AG04450 (cell line): ENCODE measurements at regions of chr14 and their contacts with region 1.

Region 1: GRCh38 chr14:20970983-20971704 is 15.9 kb downstream of the RNASE2 start:
- DNase-seq: peak; percentile 69
- H3K4me3 ChIP-seq: peak overlapping the region; percentile 69
- H3K27ac ChIP-seq: peak overlapping the region; percentile 47
- H3K27me3 ChIP-seq: peaks cover 12% of the 10 kb centered on the region
- CTCF ChIP-seq: peak; percentile 98

Region 2: DNA sequence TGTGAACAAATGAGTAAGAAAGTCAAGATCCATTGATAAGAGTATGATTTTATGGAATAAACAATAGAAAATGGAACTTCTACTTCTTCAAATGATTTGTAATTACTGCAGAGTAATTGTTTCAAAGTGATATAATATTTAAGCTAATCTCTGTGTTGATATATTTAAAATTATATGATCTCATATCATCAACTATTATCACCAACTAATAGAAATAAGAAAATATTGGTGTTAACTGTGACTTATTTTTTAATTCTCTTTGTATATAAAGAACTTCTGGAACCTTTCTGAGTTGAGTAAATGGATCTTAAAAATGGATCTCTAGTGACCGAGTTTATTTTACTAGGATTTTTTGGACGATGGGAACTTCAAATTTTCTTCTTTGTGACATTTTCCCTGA is 911.4 kb before region 1 on chr14 and contains the start of gene OR4L1:
- CTCF ChIA-PET with region 1: no interaction called
- POLR2A ChIA-PET with region 1: no interaction called
- DNase-seq: no peak
- H3K4me3 ChIP-seq: no peak within 1 kb of the TSS
- H3K27ac ChIP-seq: no peak within 1 kb of the TSS
- H3K27me3 ChIP-seq: no peaks in the 10 kb centered on the region
- CTCF ChIP-seq: no peak
- polyA plus RNA-seq, gene OR4L1: not detected in 2 replicates

Region 3: GRCh38 chr14:20682435-20683124 is 288.6 kb before region 1 on chr14:
- CTCF ChIA-PET with region 1: interaction called, 16 read pairs
- POLR2A ChIA-PET with region 1: no interaction called
- DNase-seq: no peak
- H3K4me3 ChIP-seq: peak overlapping the region; percentile 86
- H3K27ac ChIP-seq: peak overlapping the region; percentile 99
- H3K27me3 ChIP-seq: no peaks in the 10 kb centered on the region
- CTCF ChIP-seq: 0 out of 2 replicates have a peak, but pooled peaks have one; percentile 14

Region 4: DNA sequence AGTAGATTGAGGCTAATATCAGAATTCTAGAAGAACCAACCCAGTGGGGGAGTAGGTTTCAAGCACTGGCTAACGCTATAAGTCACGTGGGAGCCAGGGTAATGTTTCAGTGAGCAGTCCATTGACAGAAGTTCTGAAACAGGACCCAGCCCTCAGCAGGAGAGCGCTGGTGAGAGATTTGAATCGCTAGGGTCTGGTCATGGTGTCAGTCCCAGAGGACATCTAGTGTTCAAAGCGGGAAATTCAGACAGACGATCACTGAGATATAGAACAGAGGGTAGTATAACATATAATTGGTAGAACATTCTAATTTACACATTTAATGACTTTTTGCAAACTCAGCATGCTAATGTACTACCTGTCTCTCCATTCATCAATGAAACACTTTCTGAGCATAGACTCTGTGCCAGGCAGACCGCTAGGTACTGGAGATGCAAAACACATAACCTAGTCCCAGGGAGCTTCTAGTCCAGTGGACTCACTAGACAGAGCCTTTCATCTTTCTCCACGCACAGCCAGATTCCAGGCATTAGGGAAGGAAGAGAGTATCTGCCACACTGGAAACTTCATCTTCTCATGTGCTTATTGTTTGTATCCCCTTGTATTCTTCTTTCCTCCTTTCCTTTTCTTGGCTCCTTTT is 115.4 kb before region 1 on chr14:
- CTCF ChIA-PET with region 1: interaction called, 80 read pairs
- POLR2A ChIA-PET with region 1: no interaction called
- DNase-seq: no peak
- H3K4me3 ChIP-seq: no peak overlapping the region
- H3K27ac ChIP-seq: no peak overlapping the region
- H3K27me3 ChIP-seq: peaks cover 7% of the 10 kb centered on the region
- CTCF ChIP-seq: peak; percentile 64

Region 5: GRCh38 chr14:20982646-20983369 is 11.7 kb after region 1 on chr14:
- CTCF ChIA-PET with region 1: interaction called, 42 read pairs
- POLR2A ChIA-PET with region 1: interaction called, 4 read pairs
- DNase-seq: no peak
- H3K4me3 ChIP-seq: no peak overlapping the region
- H3K27ac ChIP-seq: no peak overlapping the region
- H3K27me3 ChIP-seq: peaks cover 9% of the 10 kb centered on the region
- CTCF ChIP-seq: no peak

Region 6: DNA sequence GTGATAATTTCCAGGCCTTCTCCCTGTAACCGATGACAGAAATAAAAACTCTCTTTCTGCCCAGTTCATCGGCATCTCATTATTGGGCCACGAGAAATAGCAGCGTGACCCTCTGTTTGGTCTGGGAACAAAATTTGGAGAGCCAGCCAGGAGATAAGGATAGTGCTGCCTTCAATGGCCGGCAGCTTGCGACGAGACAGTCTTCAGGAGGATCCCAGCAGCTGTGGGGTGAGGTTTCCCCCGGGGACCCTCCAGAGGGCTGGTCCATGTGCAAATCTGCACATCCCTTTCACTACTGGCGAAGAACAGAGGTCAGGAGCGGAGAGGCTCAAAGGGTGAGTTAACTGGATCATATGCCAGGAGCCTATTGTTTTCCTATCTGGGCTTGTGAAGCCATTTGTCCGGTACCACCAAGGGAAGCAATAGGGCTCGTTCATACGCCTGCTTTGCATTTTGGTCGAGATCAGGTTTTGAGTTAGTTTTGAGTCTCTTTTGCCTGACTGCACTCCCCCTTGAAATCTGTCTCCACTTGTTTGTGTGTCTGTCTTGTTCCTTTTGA is 32.7 kb after region 1 on chr14:
- CTCF ChIA-PET with region 1: interaction called, 55 read pairs
- POLR2A ChIA-PET with region 1: no interaction called
- DNase-seq: no peak
- H3K4me3 ChIP-seq: no peak overlapping the region
- H3K27ac ChIP-seq: no peak overlapping the region
- H3K27me3 ChIP-seq: no peaks in the 10 kb centered on the region
- CTCF ChIP-seq: no peak

Region 7: DNA sequence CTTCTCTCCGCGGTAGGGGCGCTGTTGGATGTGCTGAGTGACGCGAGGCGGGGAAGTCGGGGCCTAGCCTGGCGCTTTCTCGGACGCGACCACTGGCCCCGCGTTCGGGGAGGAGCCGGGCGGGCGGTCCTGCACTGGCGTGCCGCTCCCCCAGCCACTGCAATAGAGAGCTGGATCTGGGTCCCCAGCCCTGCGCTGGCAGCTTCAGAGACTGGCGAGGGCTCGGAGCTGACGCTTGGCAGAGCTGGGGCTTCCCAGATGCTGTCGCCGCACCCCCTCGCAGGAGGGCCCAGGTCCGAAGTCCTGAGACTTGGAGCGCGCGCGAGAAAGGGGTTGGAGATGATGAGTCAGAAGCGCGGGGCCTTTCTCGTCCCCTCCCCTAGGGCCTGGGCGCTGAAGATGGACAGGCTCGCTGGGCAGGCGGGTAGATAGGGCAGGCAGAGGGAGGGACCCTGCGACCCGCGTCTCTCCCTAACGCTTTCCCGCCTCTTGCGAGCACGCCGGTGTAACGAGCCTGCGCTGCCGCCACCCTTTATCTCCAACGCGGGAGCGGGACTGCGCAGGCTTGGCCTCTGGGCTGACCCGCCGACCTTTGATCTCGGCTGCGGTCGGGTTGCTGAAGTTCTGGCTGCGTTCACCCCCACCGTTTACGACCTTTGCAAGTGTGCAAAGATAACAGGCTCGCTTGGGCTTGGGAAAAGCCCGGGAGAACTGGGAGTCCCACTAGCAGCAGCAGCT is 132.7 kb after region 1 on chr14:
- CTCF ChIA-PET with region 1: interaction called, 28 read pairs
- POLR2A ChIA-PET with region 1: interaction called, 3 read pairs
- DNase-seq: peak; percentile 90
- H3K4me3 ChIP-seq: peak overlapping the region; percentile 75
- H3K27ac ChIP-seq: peak overlapping the region; percentile 98
- H3K27me3 ChIP-seq: peaks cover 6% of the 10 kb centered on the region
- CTCF ChIP-seq: peak; percentile 84

Region 8: DNA sequence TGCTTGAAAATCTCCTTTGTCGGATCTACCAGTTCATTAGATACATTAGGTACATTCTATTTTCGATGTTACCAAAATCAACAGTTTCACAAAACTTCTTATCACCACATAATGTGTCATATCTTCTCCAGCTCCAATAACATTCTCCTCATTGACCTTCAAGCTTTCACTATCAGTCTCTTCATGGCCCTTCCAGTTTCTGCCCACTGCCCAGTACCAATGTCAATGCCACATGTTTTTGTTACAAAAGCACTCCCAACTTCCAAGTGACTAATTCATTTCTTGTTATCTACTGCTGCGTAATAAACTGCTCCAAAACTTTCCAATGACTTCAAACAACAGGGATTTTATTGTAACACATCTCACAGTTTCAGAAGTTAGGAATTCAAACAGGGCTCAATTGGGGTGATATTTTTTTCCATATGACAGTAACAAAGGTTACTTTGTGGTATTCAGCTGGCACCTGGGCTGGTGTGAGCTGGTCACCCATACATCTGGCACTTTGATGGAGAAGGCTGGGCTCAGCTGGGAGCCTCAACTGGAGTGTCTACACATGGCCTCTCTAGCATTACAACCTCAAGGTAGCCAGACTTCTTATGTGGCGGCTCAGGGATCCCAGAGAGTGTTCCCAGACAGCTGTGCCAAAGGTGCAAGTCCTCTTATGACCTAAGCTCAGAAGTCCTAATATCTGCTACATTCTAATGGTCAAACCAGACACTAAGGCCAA is 178.7 kb after region 1 on chr14:
- CTCF ChIA-PET with region 1: no interaction called
- POLR2A ChIA-PET with region 1: no interaction called
- DNase-seq: no peak
- H3K4me3 ChIP-seq: no peak overlapping the region
- H3K27ac ChIP-seq: no peak overlapping the region
- H3K27me3 ChIP-seq: peaks cover 3% of the 10 kb centered on the region
- CTCF ChIP-seq: no peak